Breast epithelium (tissue), 4 donors: ENCODE measurements at regions of chr3 and their contacts with region 1.

Region 1: DNA sequence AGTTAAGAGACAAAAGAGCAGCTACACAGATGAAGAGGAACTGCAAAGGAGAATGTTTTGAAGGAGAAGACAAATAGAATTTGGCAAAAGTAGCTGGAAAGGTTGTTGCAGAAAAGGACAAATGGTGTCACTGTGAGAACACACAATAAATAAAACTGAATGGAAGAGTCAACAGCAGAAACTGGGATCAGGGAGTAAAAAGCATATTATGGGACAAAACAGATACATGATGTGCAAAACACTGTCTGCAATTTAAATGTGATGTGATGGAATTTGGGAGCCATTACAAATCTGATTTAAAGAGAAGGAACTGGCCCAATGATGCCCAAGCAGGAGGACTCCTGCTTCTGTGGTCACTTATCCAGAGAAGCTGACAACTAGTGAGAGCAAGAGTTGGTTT is 46.1 kb downstream of the CD47 start:
- DNase-seq: no peak
- H3K4me3 ChIP-seq: no peak overlapping the region
- H3K27ac ChIP-seq: no peak overlapping the region
- H3K4me1 ChIP-seq: no peaks in the 10 kb centered on the region
- H3K27me3 ChIP-seq: no peaks in the 10 kb centered on the region
- CTCF ChIP-seq: no peak
- POLR2A ChIP-seq: no peak

Region 2: DNA sequence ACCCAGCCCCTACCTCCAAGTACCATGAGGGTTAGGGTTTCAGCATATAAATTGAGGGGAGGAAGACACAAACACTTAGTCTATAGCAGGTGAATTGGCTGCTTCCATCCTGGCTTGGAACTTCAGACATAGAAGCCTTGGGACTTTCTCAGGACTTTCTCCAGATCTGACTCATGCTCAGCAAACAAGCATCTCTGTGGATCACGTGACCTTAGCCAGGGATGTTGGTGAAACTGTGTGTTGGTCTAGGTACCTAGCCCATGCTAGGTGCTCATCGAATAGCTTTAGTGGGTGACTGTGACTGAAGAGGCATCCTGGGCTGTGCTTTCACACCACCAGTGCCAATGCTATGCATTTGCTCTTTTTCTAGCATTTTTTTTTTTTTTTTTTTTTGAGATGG is 12.8 kb before region 1 on chr3:
- intact Hi-C with region 1: loop called (anchors 1 kb)
- DNase-seq: no peak
- H3K4me3 ChIP-seq: no peak overlapping the region
- H3K27ac ChIP-seq: no peak overlapping the region
- H3K4me1 ChIP-seq: no peaks in the 10 kb centered on the region
- H3K27me3 ChIP-seq: no peaks in the 10 kb centered on the region
- CTCF ChIP-seq: no peak
- POLR2A ChIP-seq: no peak

Region 3: DNA sequence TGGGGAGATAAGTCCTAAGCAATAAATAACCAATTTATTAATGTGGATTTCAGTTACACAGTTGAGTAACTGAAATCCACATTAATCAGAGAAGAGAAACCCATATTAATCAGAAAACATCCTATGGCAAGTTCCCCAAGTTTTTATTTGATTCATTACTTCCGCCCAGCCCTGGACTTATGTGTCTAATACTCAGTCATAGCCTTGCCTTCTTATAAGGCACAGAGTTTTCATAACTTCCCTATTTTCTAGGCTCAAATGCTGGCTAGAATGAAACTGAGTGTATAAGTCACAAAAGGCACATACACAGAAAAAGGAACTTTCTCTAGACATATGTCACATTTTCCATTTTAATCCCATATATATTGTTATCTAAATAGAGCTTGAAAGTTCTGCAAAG is 17.4 kb after region 1 on chr3:
- intact Hi-C with region 1: no loop called
- DNase-seq: no peak
- H3K4me3 ChIP-seq: no peak overlapping the region
- H3K27ac ChIP-seq: no peak overlapping the region
- H3K4me1 ChIP-seq: no peaks in the 10 kb centered on the region
- H3K27me3 ChIP-seq: no peaks in the 10 kb centered on the region
- CTCF ChIP-seq: no peak
- POLR2A ChIP-seq: no peak